ENCODE measurements at regions of chr21 and their contacts with region 1.

Region 1: GRCh38 chr21:27700974-27701614 is 734.2 kb upstream of the ADAMTS5 start:
- DNase-seq: peak; percentile 17 to 56 (median 37)
- ATAC-seq: peak; percentile 72
- H3K4me3 ChIP-seq: no peak overlapping the region
- H3K4me3 Mint-ChIP-seq: no peak overlapping the region
- H3K27ac ChIP-seq: no peak overlapping the region
- H3K27ac Mint-ChIP-seq: no peak overlapping the region
- H3K4me1 ChIP-seq: no peaks in the 10 kb centered on the region
- H3K4me1 Mint-ChIP-seq: no peaks in the 10 kb centered on the region
- H3K27me3 ChIP-seq: no peaks in the 10 kb centered on the region
- H3K27me3 Mint-ChIP-seq: peaks cover 3 to 17% (median 13%) of the 10 kb centered on the region in 5 donors

Region 2: GRCh38 chr21:26769613-26770188 is 931.4 kb before region 1 on chr21:
- CTCF ChIA-PET with region 1: no interaction called
- POLR2A ChIA-PET with region 1: no interaction called
- intact Hi-C with region 1: loop called in 1 of 2 experiments (anchors 2 kb)
- DNase-seq: peak in 2 of 9 donors; percentile 3 to 28
- ATAC-seq: no peak
- H3K4me3 ChIP-seq: no peak overlapping the region
- H3K4me3 Mint-ChIP-seq: no peak overlapping the region
- H3K27ac ChIP-seq: no peak overlapping the region
- H3K27ac Mint-ChIP-seq: no peak overlapping the region
- H3K4me1 ChIP-seq: no peaks in the 10 kb centered on the region
- H3K4me1 Mint-ChIP-seq: no peaks in the 10 kb centered on the region
- H3K27me3 ChIP-seq: no peaks in the 10 kb centered on the region
- H3K27me3 Mint-ChIP-seq: peaks cover 0 to 8% (median 3%) of the 10 kb centered on the region in 5 donors

Region 3: GRCh38 chr21:26850108-26850643 is 850.9 kb before region 1 on chr21:
- CTCF ChIA-PET with region 1: no interaction called
- POLR2A ChIA-PET with region 1: no interaction called
- intact Hi-C with region 1: loop called in 1 of 2 experiments (anchors 1 kb)
- DNase-seq: peak in 2 of 9 donors; percentile 14 to 20
- ATAC-seq: no peak
- H3K4me3 ChIP-seq: no peak overlapping the region
- H3K4me3 Mint-ChIP-seq: no peak overlapping the region
- H3K27ac ChIP-seq: no peak overlapping the region
- H3K27ac Mint-ChIP-seq: no peak overlapping the region
- H3K4me1 ChIP-seq: peaks cover 3 to 11% of the 10 kb centered on the region in 2 donors
- H3K4me1 Mint-ChIP-seq: peaks cover 18 to 26% (median 20%) of the 10 kb centered on the region in 7 donors
- H3K27me3 ChIP-seq: peaks cover 0 to 14% of the 10 kb centered on the region in 2 donors
- H3K27me3 Mint-ChIP-seq: peaks cover 37 to 49% (median 42%) of the 10 kb centered on the region in 5 donors

Region 4: DNA sequence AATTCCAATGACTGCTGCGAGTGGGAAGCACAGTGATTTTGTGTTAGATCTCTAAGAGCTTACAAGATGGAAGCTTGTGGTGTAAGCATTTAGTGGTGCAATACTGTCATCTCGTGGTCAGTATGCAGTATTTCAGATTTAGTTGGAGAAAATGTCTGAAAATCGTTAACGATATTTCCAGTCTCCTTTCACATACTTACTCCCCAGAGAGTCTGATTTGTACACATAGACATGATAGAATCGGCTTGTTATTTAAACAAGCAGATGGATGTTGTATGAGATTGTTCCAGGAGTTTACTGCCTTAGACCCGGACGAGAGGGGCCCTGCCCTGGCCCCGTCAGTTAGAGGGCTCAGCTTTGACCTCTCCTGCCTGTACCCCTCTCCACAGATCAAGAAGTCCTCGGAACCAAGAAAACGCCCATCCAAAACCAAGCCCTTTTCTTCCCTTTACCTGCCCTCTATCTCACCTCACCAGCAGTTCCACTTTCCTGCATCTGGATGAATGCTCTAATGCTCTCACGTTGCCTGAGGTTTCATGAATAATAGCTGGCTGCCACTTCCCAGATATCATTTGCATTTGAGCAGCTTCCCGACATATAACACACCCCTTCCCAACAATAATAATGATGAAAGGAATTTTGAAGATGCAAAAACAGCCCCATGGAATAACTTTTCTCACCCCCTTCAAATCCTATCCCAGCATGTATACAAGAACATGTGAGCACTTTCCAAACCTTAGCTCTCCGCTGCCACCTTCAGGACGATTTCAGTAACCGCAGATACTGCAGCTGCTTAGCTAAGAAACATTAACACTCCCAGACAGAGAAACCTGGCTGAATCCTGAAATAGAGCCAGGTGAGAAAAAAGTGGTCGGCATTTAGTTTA is 1044.3 kb after region 1 on chr21:
- CTCF ChIA-PET with region 1: interaction called, 4 read pairs
- POLR2A ChIA-PET with region 1: no interaction called
- intact Hi-C with region 1: loop called (anchors 2 kb)
- DNase-seq: peak; percentile 31 to 69 (median 60)
- ATAC-seq: peak; percentile 91
- H3K4me3 ChIP-seq: peak overlapping the region; percentile 49
- H3K4me3 Mint-ChIP-seq: no peak overlapping the region
- H3K27ac ChIP-seq: no peak overlapping the region
- H3K27ac Mint-ChIP-seq: no peak overlapping the region
- H3K4me1 ChIP-seq: peaks cover 0 to 3% of the 10 kb centered on the region in 2 donors
- H3K4me1 Mint-ChIP-seq: no peaks in the 10 kb centered on the region
- H3K27me3 ChIP-seq: no peaks in the 10 kb centered on the region
- H3K27me3 Mint-ChIP-seq: peaks cover 0 to 5% (median 0%) of the 10 kb centered on the region in 5 donors

Region 5: DNA sequence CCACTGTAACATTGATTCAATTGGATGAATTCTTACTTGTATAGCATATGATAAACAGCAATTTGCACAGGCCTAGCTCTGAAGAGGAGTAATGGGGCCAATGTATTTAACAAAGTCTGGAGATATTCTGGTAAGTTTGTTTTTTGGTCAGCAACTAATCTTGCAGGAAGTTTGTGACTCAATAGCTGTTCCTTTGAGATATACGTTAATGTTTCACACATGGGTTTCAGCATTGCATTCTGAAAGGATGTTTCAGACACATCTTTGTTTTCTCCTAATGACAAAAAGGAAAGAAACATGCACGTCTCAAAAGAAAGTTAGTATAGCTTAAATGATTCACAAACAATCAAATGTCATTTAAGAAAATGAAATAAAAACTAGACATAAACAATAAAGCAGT is 1242.5 kb after region 1 on chr21:
- CTCF ChIA-PET with region 1: no interaction called
- POLR2A ChIA-PET with region 1: no interaction called
- intact Hi-C with region 1: loop called in 1 of 2 experiments (anchors 5 kb)
- DNase-seq: no peak
- ATAC-seq: no peak
- H3K4me3 ChIP-seq: no peak overlapping the region
- H3K4me3 Mint-ChIP-seq: no peak overlapping the region
- H3K27ac ChIP-seq: no peak overlapping the region
- H3K27ac Mint-ChIP-seq: peak overlapping the region in 1 of 9 donors; percentile 15
- H3K4me1 ChIP-seq: no peaks in the 10 kb centered on the region
- H3K4me1 Mint-ChIP-seq: peaks cover 0 to 9% (median 0%) of the 10 kb centered on the region in 7 donors
- H3K27me3 ChIP-seq: no peaks in the 10 kb centered on the region
- H3K27me3 Mint-ChIP-seq: no peaks in the 10 kb centered on the region

Measured in naive thymus-derived CD4-positive, alpha-beta T cell (primary cell).